ENCODE measurements at regions of chr15 and their contacts with region 1.

Region 1: GRCh38 chr15:84588053-84588874 is 12.5 kb upstream of the ZSCAN2 start:
- DNase-seq: peak; percentile 80 to 81 (median 80)
- H3K4me3 ChIP-seq: no peak overlapping the region
- H3K4me3 Mint-ChIP-seq: peak overlapping the region in 7 of 8 donors; percentile 19 to 77 (median 38)
- H3K27ac ChIP-seq: no peak overlapping the region
- H3K27ac Mint-ChIP-seq: peak overlapping the region in 4 of 7 donors; percentile 3 to 50 (median 31)
- H3K4me1 ChIP-seq: peaks cover 4% of the 10 kb centered on the region
- H3K4me1 Mint-ChIP-seq: peaks cover 0 to 5% (median 2%) of the 10 kb centered on the region in 4 donors
- H3K27me3 ChIP-seq: no peaks in the 10 kb centered on the region
- H3K27me3 Mint-ChIP-seq: peaks cover 0 to 5% of the 10 kb centered on the region in 2 donors

Region 2: DNA sequence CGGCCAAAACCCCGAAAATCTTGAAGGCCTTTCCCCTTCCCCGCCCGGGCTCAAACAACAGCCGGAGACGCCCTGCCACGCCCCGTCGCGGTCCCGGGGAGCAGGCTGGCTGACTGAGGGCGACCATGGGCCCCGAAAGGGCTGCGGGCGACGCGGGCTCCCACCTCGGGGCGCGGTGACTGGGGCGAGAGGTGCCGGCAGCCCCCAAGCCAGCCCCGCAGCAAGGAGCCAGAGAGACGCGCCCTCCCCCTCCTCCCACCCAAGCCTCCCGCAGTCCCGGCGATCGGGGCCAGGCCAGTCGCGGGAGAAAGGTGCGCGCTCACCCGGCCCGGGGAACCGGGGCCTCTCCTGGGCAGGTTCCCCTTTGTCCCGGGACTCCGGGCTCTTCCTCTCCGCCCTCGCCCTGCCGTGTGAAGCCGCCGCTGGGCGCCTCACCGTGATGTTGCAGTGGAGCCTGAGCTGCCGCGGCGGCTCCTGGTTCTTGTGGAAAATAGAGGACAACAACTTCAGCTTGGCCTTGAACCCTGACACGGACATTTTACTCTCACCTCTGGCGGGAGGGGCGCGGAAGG is 18.0 kb before region 1 on chr15:
- CTCF ChIA-PET with region 1: interaction called, 51 read pairs
- POLR2A ChIA-PET with region 1: interaction called, 5 read pairs
- intact Hi-C with region 1: no loop called
- DNase-seq: peak; percentile 24 to 57 (median 41)
- H3K4me3 ChIP-seq: peak overlapping the region; percentile 65 to 69
- H3K4me3 Mint-ChIP-seq: peak overlapping the region; percentile 83 to 91 (median 87)
- H3K27ac ChIP-seq: peak overlapping the region; percentile 43
- H3K27ac Mint-ChIP-seq: peak overlapping the region; percentile 77 to 95 (median 89)
- H3K4me1 ChIP-seq: peaks cover 7% of the 10 kb centered on the region
- H3K4me1 Mint-ChIP-seq: peaks cover 4 to 24% (median 10%) of the 10 kb centered on the region in 4 donors
- H3K27me3 ChIP-seq: no peaks in the 10 kb centered on the region
- H3K27me3 Mint-ChIP-seq: no peaks in the 10 kb centered on the region

Region 3: DNA sequence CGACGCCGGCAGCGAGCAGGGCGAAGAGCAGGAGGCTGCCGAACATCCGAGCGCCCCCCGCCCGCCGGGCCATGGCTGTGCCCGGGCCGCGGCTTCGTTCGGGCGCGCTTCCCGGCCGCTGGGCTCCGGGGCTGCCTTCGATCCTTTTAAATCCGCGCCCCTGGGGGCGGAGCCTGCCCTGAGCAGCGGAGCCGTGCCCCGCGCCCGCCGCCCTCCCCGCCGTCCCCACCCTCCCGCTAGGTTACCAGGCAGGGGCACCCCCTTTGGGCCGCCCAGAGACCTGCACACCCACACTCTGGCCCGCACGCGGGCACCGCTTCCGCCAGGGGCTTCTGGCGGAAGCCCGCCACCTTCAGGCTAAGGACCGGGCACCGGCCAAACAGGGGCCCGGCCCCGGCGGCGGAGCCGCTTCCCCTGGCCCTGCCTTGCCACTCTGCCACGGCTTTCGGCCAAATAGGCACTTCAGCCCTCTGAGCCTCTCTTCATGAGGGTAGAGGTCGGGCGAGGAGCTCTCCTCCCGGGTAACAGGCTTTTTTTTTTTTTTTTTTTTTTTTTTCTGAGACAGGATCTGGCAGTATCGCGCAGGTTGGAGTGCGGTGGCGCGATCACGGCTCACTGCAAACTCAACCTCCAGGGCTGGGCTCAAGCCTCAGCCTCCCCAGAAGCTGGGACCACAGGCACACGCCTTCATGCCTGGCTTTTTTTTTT is 70.0 kb after region 1 on chr15 and contains the start of gene NMB:
- CTCF ChIA-PET with region 1: interaction called, 13 read pairs
- POLR2A ChIA-PET with region 1: interaction called, 3 read pairs
- intact Hi-C with region 1: loop called (anchors 1 kb)
- DNase-seq: peak; percentile 87 to 90 (median 88)
- H3K4me3 ChIP-seq: peak within 1 kb of the TSS; percentile 39 to 44
- H3K4me3 Mint-ChIP-seq: peak within 1 kb of the TSS; percentile 77 to 87 (median 81)
- H3K27ac ChIP-seq: peak within 1 kb of the TSS; percentile 58
- H3K27ac Mint-ChIP-seq: peak within 1 kb of the TSS; percentile 89 to 98 (median 93)
- H3K4me1 ChIP-seq: peaks cover 34% of the 10 kb centered on the region
- H3K4me1 Mint-ChIP-seq: peaks cover 14 to 52% (median 35%) of the 10 kb centered on the region in 4 donors
- H3K27me3 ChIP-seq: no peaks in the 10 kb centered on the region
- H3K27me3 Mint-ChIP-seq: no peaks in the 10 kb centered on the region
- total RNA-seq, gene NMB: 2.4 to 2.5 TPM

Region 4: GRCh38 chr15:84690342-84690741 is 102.1 kb after region 1 on chr15:
- CTCF ChIA-PET with region 1: no interaction called
- POLR2A ChIA-PET with region 1: no interaction called
- intact Hi-C with region 1: no loop called
- DNase-seq: no peak
- H3K4me3 ChIP-seq: no peak overlapping the region
- H3K4me3 Mint-ChIP-seq: no peak overlapping the region
- H3K27ac ChIP-seq: no peak overlapping the region
- H3K27ac Mint-ChIP-seq: peak overlapping the region in 5 of 7 donors; percentile 16 to 51 (median 32)
- H3K4me1 ChIP-seq: peaks cover 11% of the 10 kb centered on the region
- H3K4me1 Mint-ChIP-seq: peaks cover 13 to 24% (median 19%) of the 10 kb centered on the region in 4 donors
- H3K27me3 ChIP-seq: no peaks in the 10 kb centered on the region
- H3K27me3 Mint-ChIP-seq: no peaks in the 10 kb centered on the region

Region 5: GRCh38 chr15:84883433-84883832 is 295.2 kb after region 1 on chr15:
- CTCF ChIA-PET with region 1: interaction called, 19 read pairs
- POLR2A ChIA-PET with region 1: no interaction called
- intact Hi-C with region 1: loop called (anchors 1 kb)
- DNase-seq: no peak
- H3K4me3 ChIP-seq: no peak overlapping the region
- H3K4me3 Mint-ChIP-seq: no peak overlapping the region
- H3K27ac ChIP-seq: no peak overlapping the region
- H3K27ac Mint-ChIP-seq: no peak overlapping the region
- H3K4me1 ChIP-seq: no peaks in the 10 kb centered on the region
- H3K4me1 Mint-ChIP-seq: no peaks in the 10 kb centered on the region
- H3K27me3 ChIP-seq: no peaks in the 10 kb centered on the region
- H3K27me3 Mint-ChIP-seq: no peaks in the 10 kb centered on the region

Region 6: GRCh38 chr15:85000189-85000864 is 412.1 kb after region 1 on chr15:
- CTCF ChIA-PET with region 1: no interaction called
- POLR2A ChIA-PET with region 1: no interaction called
- intact Hi-C with region 1: no loop called
- DNase-seq: no peak
- H3K4me3 ChIP-seq: no peak overlapping the region
- H3K4me3 Mint-ChIP-seq: peak overlapping the region in 1 of 8 donors; percentile 40
- H3K27ac ChIP-seq: no peak overlapping the region
- H3K27ac Mint-ChIP-seq: peak overlapping the region in 1 of 7 donors; percentile 35
- H3K4me1 ChIP-seq: peaks cover 40% of the 10 kb centered on the region
- H3K4me1 Mint-ChIP-seq: peaks cover 29 to 74% (median 46%) of the 10 kb centered on the region in 4 donors
- H3K27me3 ChIP-seq: no peaks in the 10 kb centered on the region
- H3K27me3 Mint-ChIP-seq: no peaks in the 10 kb centered on the region

Region 7: GRCh38 chr15:85044251-85044853 is 456.1 kb after region 1 on chr15:
- CTCF ChIA-PET with region 1: interaction called, 9 read pairs
- POLR2A ChIA-PET with region 1: no interaction called
- intact Hi-C with region 1: loop called (anchors 1 kb)
- DNase-seq: peak; percentile 31 to 46 (median 35)
- H3K4me3 ChIP-seq: no peak overlapping the region
- H3K4me3 Mint-ChIP-seq: no peak overlapping the region
- H3K27ac ChIP-seq: no peak overlapping the region
- H3K27ac Mint-ChIP-seq: peak overlapping the region in 5 of 7 donors; percentile 11 to 64 (median 50)
- H3K4me1 ChIP-seq: peaks cover 12% of the 10 kb centered on the region
- H3K4me1 Mint-ChIP-seq: peaks cover 12 to 37% (median 21%) of the 10 kb centered on the region in 4 donors
- H3K27me3 ChIP-seq: no peaks in the 10 kb centered on the region
- H3K27me3 Mint-ChIP-seq: no peaks in the 10 kb centered on the region